Naive thymus-derived CD4-positive, alpha-beta T cell (primary cell): ENCODE measurements at regions of chr17 and their contacts with region 1.

Region 1: DNA sequence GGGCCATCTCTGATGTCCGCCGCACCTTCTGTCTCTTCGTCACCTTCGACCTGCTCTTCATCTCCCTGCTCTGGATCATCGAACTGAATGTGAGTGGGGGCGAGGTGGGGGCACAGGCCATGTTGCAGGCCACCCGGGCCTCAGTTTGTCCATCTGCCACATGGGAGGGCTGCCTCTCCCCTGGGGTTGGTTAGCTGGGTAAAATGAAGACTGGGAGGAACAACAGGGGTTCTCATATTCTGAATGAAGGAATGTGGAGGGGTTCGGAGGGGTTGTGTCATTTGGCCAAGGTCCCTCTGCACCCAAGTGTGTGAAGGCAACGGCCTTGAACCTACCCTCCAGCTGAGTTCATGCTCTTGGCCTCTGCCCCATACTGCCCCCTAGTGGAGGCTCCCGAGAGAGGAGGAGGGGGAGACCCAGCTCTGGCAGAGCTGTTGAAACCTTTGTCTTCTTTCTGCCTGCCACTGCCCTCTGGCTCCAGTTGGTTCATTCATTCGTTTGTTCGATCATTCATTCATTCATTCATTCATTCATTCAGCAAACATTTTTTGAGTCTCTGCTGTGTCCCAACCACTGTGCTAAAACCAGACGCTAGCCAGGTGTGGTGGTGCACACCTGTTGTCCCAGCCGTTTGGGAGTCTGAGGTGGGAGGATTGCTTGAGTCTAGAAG is 11.4 kb upstream of the TCAP start:
- DNase-seq: peak; percentile 58 to 83 (median 71)
- ATAC-seq: peak; percentile 91
- H3K4me3 ChIP-seq: no peak overlapping the region
- H3K4me3 Mint-ChIP-seq: no peak overlapping the region
- H3K27ac ChIP-seq: peak overlapping the region; percentile 36
- H3K27ac Mint-ChIP-seq: peak overlapping the region in 5 of 9 donors; percentile 21 to 74 (median 51)
- H3K4me1 ChIP-seq: peaks cover 4 to 23% of the 10 kb centered on the region in 2 donors
- H3K4me1 Mint-ChIP-seq: peaks cover 24 to 74% (median 63%) of the 10 kb centered on the region in 7 donors
- H3K27me3 ChIP-seq: no peaks in the 10 kb centered on the region
- H3K27me3 Mint-ChIP-seq: no peaks in the 10 kb centered on the region

Region 2: DNA sequence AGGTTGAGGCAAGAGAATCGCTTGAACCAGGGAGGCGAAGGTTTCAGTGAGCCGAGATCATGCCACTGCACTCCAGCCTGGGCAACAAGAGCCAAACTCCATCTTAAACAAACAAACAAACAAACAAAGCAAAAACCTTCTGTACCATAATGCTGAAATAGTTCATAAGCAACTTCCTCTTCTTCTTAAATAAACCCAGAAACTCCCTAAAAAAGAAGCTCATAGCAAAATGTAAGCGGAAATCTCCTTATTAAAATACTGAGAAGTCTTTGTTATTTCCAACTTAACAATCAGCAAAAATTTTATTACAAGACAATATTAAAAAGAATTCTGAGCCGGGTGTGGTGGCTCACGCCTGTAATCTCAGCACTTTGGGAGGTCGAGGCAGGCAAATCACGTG is 335.2 kb before region 1 on chr17:
- CTCF ChIA-PET with region 1: no interaction called
- POLR2A ChIA-PET with region 1: no interaction called
- intact Hi-C with region 1: no loop called
- DNase-seq: no peak
- ATAC-seq: no peak
- H3K4me3 ChIP-seq: no peak overlapping the region
- H3K4me3 Mint-ChIP-seq: no peak overlapping the region
- H3K27ac ChIP-seq: no peak overlapping the region
- H3K27ac Mint-ChIP-seq: no peak overlapping the region
- H3K4me1 ChIP-seq: no peaks in the 10 kb centered on the region
- H3K4me1 Mint-ChIP-seq: peaks cover 0 to 6% (median 0%) of the 10 kb centered on the region in 7 donors
- H3K27me3 ChIP-seq: no peaks in the 10 kb centered on the region
- H3K27me3 Mint-ChIP-seq: no peaks in the 10 kb centered on the region

Region 3: DNA sequence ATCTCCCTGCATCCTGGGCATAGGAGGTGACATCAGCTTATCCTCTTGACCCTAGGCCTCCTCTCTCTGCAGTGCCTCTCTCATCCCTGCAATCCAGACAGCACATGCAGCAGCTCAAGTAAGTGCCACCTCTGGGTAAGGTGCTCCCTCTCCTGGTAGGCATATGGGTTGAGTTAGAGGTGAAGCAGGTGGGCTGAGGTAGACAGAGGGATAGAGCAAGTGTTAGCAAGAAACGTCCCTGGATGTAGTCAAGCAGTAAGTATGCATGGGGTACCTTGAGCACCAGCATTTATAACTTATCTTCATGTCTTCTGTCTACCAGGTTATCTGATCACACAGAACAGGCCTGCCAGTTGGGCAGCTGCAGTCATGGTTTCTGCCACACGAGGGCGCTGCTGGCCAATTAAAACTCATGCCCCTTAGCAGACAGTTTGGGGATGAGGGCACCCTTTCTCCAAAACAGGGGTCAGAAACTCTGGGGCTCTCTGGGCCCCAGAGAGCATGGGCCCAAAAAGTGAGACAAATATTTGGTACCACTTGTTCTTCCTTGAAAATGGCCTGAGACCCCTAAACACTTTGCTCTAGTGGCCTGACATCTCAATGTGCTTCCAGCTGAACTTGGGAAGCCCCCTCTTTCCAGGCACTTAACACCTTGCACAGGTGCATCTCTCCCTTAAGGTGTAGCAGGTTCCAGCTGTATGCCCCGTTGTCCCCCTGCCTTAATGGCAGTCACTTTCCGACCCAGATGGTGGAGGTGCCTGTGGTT is 105.9 kb before region 1 on chr17:
- CTCF ChIA-PET with region 1: no interaction called
- POLR2A ChIA-PET with region 1: no interaction called
- intact Hi-C with region 1: no loop called
- DNase-seq: peak; percentile 43 to 81 (median 68)
- ATAC-seq: peak; percentile 87
- H3K4me3 ChIP-seq: no peak overlapping the region
- H3K4me3 Mint-ChIP-seq: no peak overlapping the region
- H3K27ac ChIP-seq: no peak overlapping the region
- H3K27ac Mint-ChIP-seq: no peak overlapping the region
- H3K4me1 ChIP-seq: no peaks in the 10 kb centered on the region
- H3K4me1 Mint-ChIP-seq: peaks cover 0 to 2% (median 0%) of the 10 kb centered on the region in 7 donors
- H3K27me3 ChIP-seq: no peaks in the 10 kb centered on the region
- H3K27me3 Mint-ChIP-seq: no peaks in the 10 kb centered on the region

Region 4: GRCh38 chr17:39668199-39668966 is 14.6 kb after region 1 on chr17 and contains the start of gene PNMT:
- CTCF ChIA-PET with region 1: interaction called, 20 read pairs
- POLR2A ChIA-PET with region 1: interaction called, 13 read pairs
- intact Hi-C with region 1: loop called in 1 of 2 experiments (anchors 1 kb)
- DNase-seq: peak; percentile 44 to 76 (median 63)
- ATAC-seq: peak; percentile 83
- H3K4me3 ChIP-seq: peak within 1 kb of the TSS; percentile 50
- H3K4me3 Mint-ChIP-seq: peak within 1 kb of the TSS; percentile 50 to 83 (median 68)
- H3K27ac ChIP-seq: peak within 1 kb of the TSS; percentile 51
- H3K27ac Mint-ChIP-seq: peak within 1 kb of the TSS in 1 of 9 donors; percentile 26
- H3K4me1 ChIP-seq: peaks cover 4 to 13% of the 10 kb centered on the region in 2 donors
- H3K4me1 Mint-ChIP-seq: peaks cover 5 to 23% (median 14%) of the 10 kb centered on the region in 7 donors
- H3K27me3 ChIP-seq: no peaks in the 10 kb centered on the region
- H3K27me3 Mint-ChIP-seq: peaks cover 0 to 48% (median 5%) of the 10 kb centered on the region in 5 donors
- total RNA-seq, gene PNMT: 0.42 to 0.89 (median 0.50) TPM in 4 of 5 experiments, not detected in the other

Region 5: DNA sequence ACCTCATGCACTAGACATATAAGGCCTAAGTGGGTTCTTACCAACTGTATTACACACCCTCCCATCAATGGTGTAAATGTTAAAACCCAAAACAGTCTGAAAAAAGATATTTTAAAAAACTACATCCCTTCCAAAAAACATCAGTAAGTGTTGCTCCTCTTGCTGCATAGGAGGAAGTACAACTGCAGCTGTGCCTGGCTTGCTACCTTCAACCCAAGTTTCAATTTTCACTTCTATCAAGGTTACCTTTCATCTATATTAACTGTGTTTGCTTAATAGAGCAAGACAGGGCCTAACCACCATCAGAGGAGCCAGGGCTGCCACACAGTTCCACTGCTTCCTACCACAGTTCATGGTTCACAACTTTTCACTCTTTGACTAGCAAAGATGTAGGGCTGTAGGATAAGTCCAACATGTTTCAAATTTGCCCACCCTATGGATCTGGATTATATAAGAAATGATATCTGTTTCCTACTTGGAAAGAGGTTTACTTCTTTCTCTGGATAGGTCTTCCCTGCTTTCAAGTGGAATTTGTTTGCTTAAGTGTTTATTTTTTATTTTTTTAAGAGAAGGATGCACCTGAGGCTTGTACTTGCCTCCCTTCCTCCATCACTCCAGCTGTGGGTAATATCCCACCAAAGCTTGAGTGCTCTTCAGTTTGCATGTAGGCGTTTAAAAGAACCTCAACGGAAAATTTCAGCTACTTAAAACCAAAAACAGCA is 140.6 kb after region 1 on chr17:
- CTCF ChIA-PET with region 1: no interaction called
- POLR2A ChIA-PET with region 1: no interaction called
- intact Hi-C with region 1: no loop called
- DNase-seq: peak in 7 of 9 donors; percentile 28 to 67 (median 44)
- ATAC-seq: peak; percentile 83
- H3K4me3 ChIP-seq: peak overlapping the region; percentile 2
- H3K4me3 Mint-ChIP-seq: peak overlapping the region; percentile 37 to 82 (median 76)
- H3K27ac ChIP-seq: peak overlapping the region; percentile 65
- H3K27ac Mint-ChIP-seq: peak overlapping the region; percentile 86 to 96 (median 93)
- H3K4me1 ChIP-seq: peaks cover 56 to 66% of the 10 kb centered on the region in 2 donors
- H3K4me1 Mint-ChIP-seq: peaks cover 49 to 86% (median 82%) of the 10 kb centered on the region in 7 donors
- H3K27me3 ChIP-seq: no peaks in the 10 kb centered on the region
- H3K27me3 Mint-ChIP-seq: no peaks in the 10 kb centered on the region